Activated naive CD4-positive, alpha-beta T cell treated with anti-CD3 and anti-CD28 coated beads for 36 hours (primary cell): ENCODE measurements at regions of chr20 and their contacts with region 1.

Region 1: GRCh38 chr20:56400090-56400542 is 7.7 kb downstream of the CSTF1 start:
- DNase-seq: peak; percentile 80
- H3K4me3 Mint-ChIP-seq: no peak overlapping the region
- H3K27ac Mint-ChIP-seq: no peak overlapping the region
- H3K4me1 Mint-ChIP-seq: peaks cover 26% of the 10 kb centered on the region
- H3K27me3 Mint-ChIP-seq: no peaks in the 10 kb centered on the region

Region 2: DNA sequence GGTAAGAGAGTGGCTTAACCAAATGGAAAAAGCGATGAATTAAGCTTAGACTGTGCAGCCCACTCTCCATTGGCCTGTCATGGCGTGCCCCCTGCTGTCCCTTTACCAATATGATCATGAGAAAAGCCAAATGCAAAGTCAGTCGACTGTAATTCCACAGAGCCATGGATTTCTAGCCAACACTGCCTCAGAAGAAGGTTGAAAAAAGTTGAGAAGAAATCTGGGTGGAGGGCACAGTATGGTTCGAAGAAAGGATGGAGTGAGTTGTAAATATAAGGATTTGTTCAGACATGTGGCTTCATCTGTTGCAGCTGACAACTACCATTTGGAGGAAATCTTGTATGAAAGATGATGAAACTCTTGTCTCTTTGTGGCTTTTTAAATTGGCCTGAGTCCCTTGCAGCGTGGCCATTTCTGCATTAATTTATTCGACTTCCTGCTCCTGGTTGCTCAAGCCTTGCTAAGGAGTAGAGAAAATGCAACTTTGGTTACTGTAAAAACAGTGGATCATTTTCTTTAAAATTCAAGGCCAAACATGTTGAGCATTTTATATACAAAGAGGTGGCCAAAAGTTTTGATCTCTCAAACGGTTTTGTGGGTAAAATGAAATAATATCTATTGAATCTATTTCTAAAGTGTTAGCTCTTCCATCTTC is 1673.2 kb before region 1 on chr20:
- CTCF ChIA-PET with region 1: no interaction called
- intact Hi-C with region 1: no loop called
- DNase-seq: no peak
- H3K4me3 Mint-ChIP-seq: no peak overlapping the region
- H3K27ac Mint-ChIP-seq: no peak overlapping the region
- H3K4me1 Mint-ChIP-seq: no peaks in the 10 kb centered on the region
- H3K27me3 Mint-ChIP-seq: peaks cover 4% of the 10 kb centered on the region

Region 3: GRCh38 chr20:56504373-56505005 is 104.4 kb after region 1 on chr20:
- CTCF ChIA-PET with region 1: interaction called, 6 read pairs
- intact Hi-C with region 1: loop called (anchors 5 kb)
- DNase-seq: peak; percentile 39
- H3K4me3 Mint-ChIP-seq: no peak overlapping the region
- H3K27ac Mint-ChIP-seq: no peak overlapping the region
- H3K4me1 Mint-ChIP-seq: peaks cover 20% of the 10 kb centered on the region
- H3K27me3 Mint-ChIP-seq: no peaks in the 10 kb centered on the region

Region 4: DNA sequence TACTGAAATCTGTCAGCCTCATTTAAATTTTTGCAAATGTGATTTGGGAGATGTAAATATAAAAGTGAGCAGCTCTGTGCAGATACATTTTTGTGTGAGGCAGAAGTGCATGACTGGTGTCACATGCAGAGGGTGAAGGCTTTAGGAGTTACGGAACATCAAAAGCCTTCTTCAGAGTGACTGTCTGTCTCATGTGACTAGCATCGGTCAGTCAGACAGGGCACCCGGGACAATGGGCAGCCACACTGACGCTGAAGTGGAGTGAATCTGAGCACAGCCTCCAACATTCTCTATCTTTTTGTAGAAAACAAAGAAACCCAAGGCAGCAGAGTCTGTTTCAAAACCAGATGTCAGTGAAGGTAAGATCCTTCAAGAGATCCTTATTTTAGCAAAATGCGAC is 116.5 kb after region 1 on chr20:
- CTCF ChIA-PET with region 1: no interaction called
- intact Hi-C with region 1: loop called (anchors 1 kb)
- DNase-seq: no peak
- H3K4me3 Mint-ChIP-seq: no peak overlapping the region
- H3K27ac Mint-ChIP-seq: no peak overlapping the region
- H3K4me1 Mint-ChIP-seq: no peaks in the 10 kb centered on the region
- H3K27me3 Mint-ChIP-seq: no peaks in the 10 kb centered on the region